ENCODE measurements at regions of chr6 and their contacts with region 1.

Region 1: GRCh38 chr6:27893059-27893835 is 18.9 kb downstream of the OR2B2 start:
- DNase-seq: peak; percentile 91 to 92
- ATAC-seq: peak; percentile 70

Region 2: DNA sequence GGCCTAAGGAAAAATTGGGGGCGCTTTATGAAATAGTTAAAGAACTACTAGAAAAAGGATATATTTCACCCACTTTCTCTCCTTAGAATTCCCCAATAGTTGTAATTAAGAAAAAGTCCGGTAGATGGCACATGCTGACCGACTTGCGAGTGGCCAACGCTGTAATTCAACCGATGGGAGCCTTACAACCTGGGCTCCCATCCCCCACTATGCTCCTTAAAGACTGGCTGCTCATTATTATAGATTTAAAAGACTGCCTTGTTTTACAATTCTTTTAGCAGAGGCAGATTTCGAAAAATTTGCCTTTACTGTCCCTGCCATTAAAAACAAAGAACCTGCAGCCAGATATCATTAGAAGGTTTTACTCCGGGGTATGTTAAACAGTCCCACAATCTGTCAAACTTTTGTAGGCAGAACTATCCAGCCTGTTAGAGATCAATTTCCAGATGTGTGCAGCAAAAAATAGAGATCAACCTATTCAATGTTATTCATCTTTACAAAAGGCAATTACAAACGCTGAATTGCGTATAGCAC is 704.3 kb before region 1 on chr6:
- intact Hi-C with region 1: loop called in 1 of 2 experiments (anchors 10 kb)
- DNase-seq: peak; percentile 66 to 74
- ATAC-seq: peak; percentile 84

Region 3: GRCh38 chr6:27472617-27473400 is 420.4 kb before region 1 on chr6 and contains the start of gene ZNF184:
- intact Hi-C with region 1: loop called in 1 of 2 experiments (anchors 10 kb)
- DNase-seq: peak; percentile 97 to 98
- ATAC-seq: peak; percentile 92
- total RNA-seq, gene ZNF184: 5.8 to 6.5 TPM

Region 4: DNA sequence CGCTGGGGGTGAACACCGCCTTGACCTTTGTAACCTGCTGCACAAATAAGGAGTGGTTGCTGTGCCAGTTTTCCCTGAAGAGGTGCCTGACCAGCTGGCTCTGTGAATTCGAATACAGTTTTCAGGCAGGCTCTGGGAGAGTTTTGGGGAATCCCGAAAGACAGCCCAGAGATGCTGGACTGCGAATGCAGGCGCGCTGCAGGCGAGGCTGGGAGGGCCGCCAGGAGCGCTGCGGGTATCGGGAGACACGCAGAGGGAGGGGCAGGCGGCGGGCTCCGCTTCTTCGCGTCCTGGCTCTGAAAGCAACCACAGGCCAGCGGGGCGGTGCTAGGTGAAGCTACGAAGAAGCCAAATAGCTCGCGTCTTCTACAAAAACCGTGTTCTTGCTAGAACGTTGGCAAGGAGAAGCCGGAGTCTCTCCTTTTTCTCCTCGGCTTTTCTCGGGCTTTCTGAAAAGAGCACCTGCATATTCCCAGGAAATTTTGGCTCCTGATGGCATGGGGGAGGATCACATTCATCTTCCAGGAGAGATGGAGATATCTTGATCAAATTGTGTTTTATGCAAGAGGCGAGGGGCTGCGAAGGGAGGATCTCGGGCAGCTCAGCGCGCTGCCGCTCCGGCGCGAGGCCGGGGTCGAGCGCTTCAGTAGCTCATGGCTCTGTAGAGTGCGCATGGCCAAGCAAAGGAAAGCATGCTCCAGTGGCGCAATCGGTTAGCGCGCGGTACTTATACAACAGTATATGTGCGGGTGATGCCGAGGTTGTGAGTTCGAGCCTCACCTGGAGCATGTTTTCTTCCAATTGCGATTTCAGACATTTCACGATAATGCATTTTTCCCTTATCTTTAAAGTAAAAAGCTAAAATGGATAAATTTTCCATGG is 262.3 kb before region 1 on chr6:
- intact Hi-C with region 1: no loop called
- DNase-seq: peak; percentile 36 to 58
- ATAC-seq: peak; percentile 81

Region 5: GRCh38 chr6:28525496-28526039 is 632.3 kb after region 1 on chr6 and contains the start of gene GPX5:
- intact Hi-C with region 1: no loop called
- DNase-seq: no peak
- ATAC-seq: no peak
- total RNA-seq, gene GPX5: not detected